HAP-1 (cell line): ENCODE measurements at regions of chr22 and their contacts with region 1.

Region 1: GRCh38 chr22:21766691-21767462 is 31.3 kb upstream of the YPEL1 start:
- DNase-seq: no peak
- H3K4me3 ChIP-seq: no peak overlapping the region
- H3K4me1 ChIP-seq: 0 out of 2 replicates have a peak, but pooled peaks cover 1% of the 10 kb centered on the region
- H3K27me3 ChIP-seq: no peaks in the 10 kb centered on the region

Region 2: GRCh38 chr22:21652010-21652546 is 114.8 kb before region 1 on chr22:
- in situ Hi-C with region 1: no loop called
- DNase-seq: peak; percentile 96 to 98
- H3K4me3 ChIP-seq: peak overlapping the region; percentile 85
- H3K4me1 ChIP-seq: peaks cover 16% of the 10 kb centered on the region
- H3K27me3 ChIP-seq: no peaks in the 10 kb centered on the region

Region 3: DNA sequence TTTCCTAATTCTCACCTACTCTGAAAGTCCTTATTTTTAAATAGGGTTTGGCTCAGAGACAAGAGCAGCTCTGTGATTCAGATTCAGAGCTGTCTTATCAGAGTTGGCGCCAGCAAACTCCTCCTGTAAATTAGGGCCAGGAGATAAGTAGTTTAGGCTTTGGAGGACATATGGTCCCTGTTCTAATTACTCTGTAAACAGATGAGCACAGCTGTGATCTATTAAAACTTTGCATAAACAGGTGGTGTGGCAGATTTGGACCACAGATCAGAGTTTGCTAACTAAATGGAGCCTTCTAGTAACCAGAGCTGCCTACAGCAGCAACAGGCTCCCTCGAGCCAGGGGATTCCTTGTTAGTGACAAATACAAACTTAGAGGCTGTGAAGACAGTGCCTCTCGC is 59.2 kb before region 1 on chr22:
- in situ Hi-C with region 1: loop called (anchors 10 kb)
- DNase-seq: no peak
- H3K4me3 ChIP-seq: no peak overlapping the region
- H3K4me1 ChIP-seq: no peaks in the 10 kb centered on the region
- H3K27me3 ChIP-seq: no peaks in the 10 kb centered on the region